AG04449 (cell line): ENCODE measurements at regions of chr1 and their contacts with region 1.

Region 1: GRCh38 chr1:160837558-160838205 is 25.0 kb downstream of the CD244 start:
- DNase-seq: no peak
- H3K4me3 ChIP-seq: no peak overlapping the region
- CTCF ChIP-seq: no peak

Region 2: GRCh38 chr1:160850541-160850940 is 12.9 kb after region 1 on chr1:
- CTCF ChIA-PET with region 1: interaction called, 11 read pairs
- POLR2A ChIA-PET with region 1: no interaction called
- DNase-seq: no peak
- H3K4me3 ChIP-seq: no peak overlapping the region
- CTCF ChIP-seq: no peak

Region 3: DNA sequence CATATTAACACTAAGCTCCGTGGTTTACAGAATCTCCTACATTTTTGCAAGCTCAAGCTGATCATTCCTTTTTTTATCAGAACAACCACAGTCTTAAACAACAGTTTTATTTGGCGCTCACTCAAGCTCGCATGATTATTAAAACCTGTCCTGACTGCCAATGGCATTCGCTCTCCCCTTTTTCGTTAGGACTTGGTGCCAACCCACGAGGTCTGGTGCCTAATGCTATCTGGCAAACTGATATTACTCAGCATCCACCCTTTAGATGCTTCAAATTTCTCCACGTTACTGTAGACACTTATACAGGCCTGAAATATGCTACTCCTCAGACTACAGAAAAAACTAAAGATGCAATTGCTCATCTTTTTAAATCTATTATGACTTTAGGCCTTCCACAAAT is 70.3 kb after region 1 on chr1:
- CTCF ChIA-PET with region 1: no interaction called
- POLR2A ChIA-PET with region 1: no interaction called
- DNase-seq: no peak
- H3K4me3 ChIP-seq: no peak overlapping the region
- CTCF ChIP-seq: no peak

Region 4: DNA sequence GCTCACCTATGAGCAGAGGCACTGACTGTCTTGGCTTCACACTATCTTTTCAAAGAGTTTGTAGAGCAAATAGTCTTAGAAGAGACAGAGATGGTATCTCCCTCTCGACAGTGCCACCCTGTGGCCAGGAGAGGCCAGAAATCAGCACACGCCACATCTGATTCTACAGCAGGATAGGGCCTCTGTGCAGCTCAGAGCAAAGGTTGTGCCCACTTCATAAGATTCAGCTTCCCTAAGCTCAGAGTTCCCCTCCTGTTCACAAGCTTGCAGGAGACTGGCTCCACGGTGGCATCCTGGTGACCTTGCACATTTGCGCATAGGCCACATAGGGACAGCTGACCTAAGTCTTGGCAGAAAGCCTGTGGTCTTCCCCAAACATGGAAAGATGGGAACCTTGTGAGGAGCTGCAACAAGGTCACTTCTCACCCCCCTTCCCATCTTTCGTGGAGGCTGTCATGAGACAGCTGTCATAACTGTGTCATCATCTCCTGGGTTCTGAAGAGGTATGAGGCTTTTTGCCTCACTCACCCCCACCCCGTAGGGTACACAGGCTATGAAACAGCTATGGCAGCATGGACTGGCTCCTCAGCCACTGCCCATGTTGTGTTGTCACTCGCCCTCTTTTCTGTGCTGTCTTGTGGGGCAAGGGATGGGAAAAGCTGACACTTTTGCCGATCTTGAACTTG is 113.9 kb after region 1 on chr1:
- CTCF ChIA-PET with region 1: interaction called, 57 read pairs
- POLR2A ChIA-PET with region 1: no interaction called
- DNase-seq: no peak
- H3K4me3 ChIP-seq: no peak overlapping the region
- CTCF ChIP-seq: peak; percentile 66